CD8-positive, alpha-beta T cell (primary cell): ENCODE measurements at regions of chr17 and their contacts with region 1.

Region 1: GRCh38 chr17:67689534-67690177 is 28.1 kb upstream of the NOL11 start:
- DNase-seq: peak in 7 of 9 experiments; percentile 18 to 77 (median 39)
- ATAC-seq: peak; percentile 73
- H3K4me3 ChIP-seq: no peak overlapping the region
- H3K4me3 Mint-ChIP-seq: no peak overlapping the region
- H3K27ac ChIP-seq: no peak overlapping the region
- H3K27ac Mint-ChIP-seq: no peak overlapping the region
- H3K4me1 ChIP-seq: no peaks in the 10 kb centered on the region
- H3K4me1 Mint-ChIP-seq: peaks cover 4% of the 10 kb centered on the region
- H3K27me3 ChIP-seq: no peaks in the 10 kb centered on the region
- H3K27me3 Mint-ChIP-seq: no peaks in the 10 kb centered on the region
- CTCF ChIP-seq: peak; percentile 93

Region 2: DNA sequence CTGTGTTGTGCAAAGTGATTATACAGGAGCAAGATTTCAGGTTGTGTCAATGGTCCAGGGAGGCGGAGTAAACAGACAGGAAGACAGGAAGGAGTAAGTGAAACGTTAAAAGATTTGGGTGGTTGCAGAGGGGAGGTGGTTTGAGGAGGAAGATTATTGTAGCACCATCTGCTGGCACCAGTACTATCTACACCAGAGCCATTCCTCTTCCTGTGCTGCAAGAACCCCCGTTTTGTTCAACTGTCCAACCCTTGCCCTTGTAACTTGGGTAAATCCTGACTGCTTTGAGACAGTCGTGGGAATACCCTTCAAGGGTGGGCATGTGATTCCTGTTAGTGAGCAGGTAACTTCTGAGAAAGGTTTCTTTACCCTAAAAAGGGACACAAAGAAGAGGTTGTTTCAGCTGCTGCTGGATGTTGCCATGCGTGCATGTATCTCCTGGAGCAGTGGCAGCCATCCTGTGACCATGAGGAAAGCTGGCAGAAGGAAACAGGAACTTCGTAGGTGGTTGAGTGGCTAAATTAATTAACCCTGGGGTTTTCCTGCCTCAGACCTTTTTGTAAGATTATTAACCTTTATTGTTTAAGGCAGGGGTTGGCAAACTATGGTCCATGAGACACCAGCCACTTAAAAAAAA is 1263.1 kb before region 1 on chr17:
- CTCF ChIA-PET with region 1: no interaction called
- POLR2A ChIA-PET with region 1: no interaction called
- intact Hi-C with region 1: no loop called
- DNase-seq: peak; percentile 14 to 81 (median 49)
- ATAC-seq: peak; percentile 98
- H3K4me3 ChIP-seq: no peak overlapping the region
- H3K4me3 Mint-ChIP-seq: peak overlapping the region; percentile 48
- H3K27ac ChIP-seq: no peak overlapping the region
- H3K27ac Mint-ChIP-seq: peak overlapping the region; percentile 82
- H3K4me1 ChIP-seq: peaks cover 19% of the 10 kb centered on the region
- H3K4me1 Mint-ChIP-seq: peaks cover 64% of the 10 kb centered on the region
- H3K27me3 ChIP-seq: no peaks in the 10 kb centered on the region
- H3K27me3 Mint-ChIP-seq: no peaks in the 10 kb centered on the region
- CTCF ChIP-seq: peak; percentile 48

Region 3: DNA sequence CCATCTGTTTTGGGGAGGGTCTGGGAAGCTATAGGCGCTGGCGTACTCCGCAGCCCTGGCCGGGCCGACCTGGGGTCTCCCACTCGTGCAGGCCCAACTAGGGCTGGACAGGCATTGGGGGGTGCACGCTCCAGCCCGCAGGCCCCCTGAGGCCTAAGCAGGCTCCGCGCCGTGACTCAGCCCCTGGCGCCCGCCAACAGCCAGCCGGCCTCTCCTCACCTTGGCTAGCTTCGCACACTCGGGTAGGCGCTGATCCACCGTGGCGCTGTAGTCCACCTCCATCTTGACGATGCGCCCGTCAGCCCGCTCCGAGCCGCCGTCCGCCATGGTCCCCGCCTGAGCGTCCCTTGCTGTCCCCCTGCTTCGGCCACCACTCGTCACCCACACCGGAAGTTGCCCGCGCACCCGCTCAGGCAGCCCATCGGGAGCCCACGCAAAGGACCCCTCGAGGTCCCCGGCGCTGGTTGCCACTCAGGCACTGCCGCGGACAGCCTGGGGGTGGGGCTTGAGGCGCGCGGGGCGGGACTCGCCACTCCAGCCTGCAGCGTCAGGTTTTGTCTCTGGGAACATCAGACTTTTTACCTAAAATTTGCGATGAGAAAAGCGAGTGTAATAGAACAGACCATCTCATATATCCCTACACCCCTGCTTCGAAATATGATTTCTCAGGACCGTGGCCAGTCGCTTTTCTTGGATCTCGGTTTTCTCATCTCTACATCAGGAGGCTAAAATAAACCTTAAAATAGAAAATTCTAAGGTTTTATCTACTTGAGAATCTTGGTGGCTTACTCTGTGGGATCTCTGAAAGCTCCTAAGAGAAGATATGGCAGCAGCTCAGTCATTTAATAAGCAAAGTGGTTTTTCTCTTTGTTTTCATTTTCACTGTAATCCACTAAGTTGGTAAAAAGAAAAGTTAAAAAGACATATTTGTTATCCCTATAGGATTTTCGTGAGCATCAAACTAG is 323.2 kb before region 1 on chr17 and contains the start of gene PSMD12:
- CTCF ChIA-PET with region 1: interaction called, 88 read pairs
- POLR2A ChIA-PET with region 1: interaction called, 3 read pairs
- intact Hi-C with region 1: loop called in 1 of 2 experiments (anchors 2 kb)
- DNase-seq: peak; percentile 88 to 97 (median 93)
- ATAC-seq: peak; percentile 97
- H3K4me3 ChIP-seq: peak within 1 kb of the TSS; percentile 87 to 94
- H3K4me3 Mint-ChIP-seq: peak within 1 kb of the TSS; percentile 92
- H3K27ac ChIP-seq: peak within 1 kb of the TSS; percentile 86 to 95
- H3K27ac Mint-ChIP-seq: peak within 1 kb of the TSS; percentile 95
- H3K4me1 ChIP-seq: peaks cover 40% of the 10 kb centered on the region
- H3K4me1 Mint-ChIP-seq: peaks cover 43% of the 10 kb centered on the region
- H3K27me3 ChIP-seq: no peaks in the 10 kb centered on the region
- H3K27me3 Mint-ChIP-seq: no peaks in the 10 kb centered on the region
- CTCF ChIP-seq: no peak
- total RNA-seq, gene PSMD12: 52.1 to 54.9 TPM

Region 4: GRCh38 chr17:67509390-67510289 is 180.0 kb before region 1 on chr17:
- CTCF ChIA-PET with region 1: no interaction called
- POLR2A ChIA-PET with region 1: no interaction called
- intact Hi-C with region 1: loop called in 1 of 2 experiments (anchors 10 kb)
- DNase-seq: peak in 1 of 9 experiments; percentile 30
- ATAC-seq: no peak
- H3K4me3 ChIP-seq: no peak overlapping the region
- H3K4me3 Mint-ChIP-seq: no peak overlapping the region
- H3K27ac ChIP-seq: peak overlapping the region in 1 of 2 experiments; percentile 23
- H3K27ac Mint-ChIP-seq: peak overlapping the region; percentile 66
- H3K4me1 ChIP-seq: peaks cover 3% of the 10 kb centered on the region
- H3K4me1 Mint-ChIP-seq: peaks cover 57% of the 10 kb centered on the region
- H3K27me3 ChIP-seq: no peaks in the 10 kb centered on the region
- H3K27me3 Mint-ChIP-seq: no peaks in the 10 kb centered on the region
- CTCF ChIP-seq: no peak